Psoas muscle (tissue), 8 donors: ENCODE measurements at regions of chr2 and their contacts with region 1.

Region 1: DNA sequence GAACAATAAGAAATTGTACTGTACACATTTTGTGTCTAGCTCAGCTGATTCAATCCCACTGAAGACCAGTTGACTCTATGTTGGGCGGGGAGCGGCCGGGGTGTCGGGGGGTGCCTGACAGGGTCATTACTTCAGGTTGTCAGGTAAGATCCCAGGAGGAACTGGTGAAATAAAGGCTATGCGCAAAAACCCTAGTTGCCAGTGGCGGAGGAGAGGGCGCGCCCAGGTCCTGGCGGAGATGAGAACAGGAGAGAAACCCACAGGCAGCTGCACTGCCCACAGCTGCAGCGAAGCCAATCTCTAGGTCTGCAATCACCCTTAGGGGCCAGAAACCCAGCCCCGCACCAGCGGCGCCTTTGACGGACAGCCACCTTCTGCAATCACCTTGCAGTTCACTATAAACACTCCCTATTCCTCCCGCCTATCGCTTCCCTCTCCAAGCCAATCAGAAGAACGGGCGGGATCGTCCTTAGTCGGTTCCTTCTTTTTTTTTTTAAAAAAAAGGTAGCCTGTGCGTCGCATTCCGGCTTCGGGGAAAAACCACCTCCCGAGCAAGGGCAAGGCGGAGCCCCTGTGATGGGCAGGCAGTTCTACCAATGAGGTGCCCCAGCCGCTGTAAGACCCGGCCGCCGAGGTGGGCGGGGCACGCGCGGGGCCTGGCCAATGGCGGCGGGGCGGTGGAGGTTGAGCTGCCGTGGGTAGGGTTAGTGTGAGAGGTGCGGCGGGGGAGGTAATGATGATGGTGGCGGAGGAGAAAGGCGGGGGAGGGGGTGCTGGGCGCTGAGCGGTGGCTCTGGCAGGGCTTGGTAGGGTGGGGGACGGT is at the start of gene EHBP1:
- DNase-seq: peak; percentile 99
- ATAC-seq: peak; percentile 97 to 99 (median 98)
- H3K4me3 ChIP-seq: peak within 1 kb of the TSS; percentile 77
- H3K27ac ChIP-seq: peak within 1 kb of the TSS; percentile 82
- H3K4me1 ChIP-seq: peaks cover 25% of the 10 kb centered on the region
- H3K27me3 ChIP-seq: no peaks in the 10 kb centered on the region
- CTCF ChIP-seq: no peak
- total RNA-seq, gene EHBP1: 14.3 to 20.2 (median 16.9) TPM

Region 2: GRCh38 chr2:62456721-62457539 is 248.3 kb before region 1 on chr2:
- intact Hi-C with region 1: loop called in 1 of 2 experiments (anchors 5 kb)
- DNase-seq: peak; percentile 71 to 81
- ATAC-seq: peak; percentile 89 to 96 (median 90)
- H3K4me3 ChIP-seq: peak overlapping the region; percentile 76
- H3K27ac ChIP-seq: peak overlapping the region; percentile 32
- H3K4me1 ChIP-seq: no peaks in the 10 kb centered on the region
- H3K27me3 ChIP-seq: no peaks in the 10 kb centered on the region
- CTCF ChIP-seq: peak; percentile 99

Region 3: GRCh38 chr2:62505750-62506420 is 199.3 kb before region 1 on chr2 and contains the start of gene TMEM17:
- intact Hi-C with region 1: loop called in 1 of 2 experiments (anchors 5 kb)
- DNase-seq: peak; percentile 95 to 96
- ATAC-seq: peak; percentile 95 to 98 (median 97)
- H3K4me3 ChIP-seq: peak within 1 kb of the TSS; percentile 95
- H3K27ac ChIP-seq: peak within 1 kb of the TSS; percentile 88
- H3K4me1 ChIP-seq: peaks cover 7% of the 10 kb centered on the region
- H3K27me3 ChIP-seq: no peaks in the 10 kb centered on the region
- CTCF ChIP-seq: no peak
- total RNA-seq, gene TMEM17: 0.44 to 0.79 (median 0.62) TPM

Region 4: DNA sequence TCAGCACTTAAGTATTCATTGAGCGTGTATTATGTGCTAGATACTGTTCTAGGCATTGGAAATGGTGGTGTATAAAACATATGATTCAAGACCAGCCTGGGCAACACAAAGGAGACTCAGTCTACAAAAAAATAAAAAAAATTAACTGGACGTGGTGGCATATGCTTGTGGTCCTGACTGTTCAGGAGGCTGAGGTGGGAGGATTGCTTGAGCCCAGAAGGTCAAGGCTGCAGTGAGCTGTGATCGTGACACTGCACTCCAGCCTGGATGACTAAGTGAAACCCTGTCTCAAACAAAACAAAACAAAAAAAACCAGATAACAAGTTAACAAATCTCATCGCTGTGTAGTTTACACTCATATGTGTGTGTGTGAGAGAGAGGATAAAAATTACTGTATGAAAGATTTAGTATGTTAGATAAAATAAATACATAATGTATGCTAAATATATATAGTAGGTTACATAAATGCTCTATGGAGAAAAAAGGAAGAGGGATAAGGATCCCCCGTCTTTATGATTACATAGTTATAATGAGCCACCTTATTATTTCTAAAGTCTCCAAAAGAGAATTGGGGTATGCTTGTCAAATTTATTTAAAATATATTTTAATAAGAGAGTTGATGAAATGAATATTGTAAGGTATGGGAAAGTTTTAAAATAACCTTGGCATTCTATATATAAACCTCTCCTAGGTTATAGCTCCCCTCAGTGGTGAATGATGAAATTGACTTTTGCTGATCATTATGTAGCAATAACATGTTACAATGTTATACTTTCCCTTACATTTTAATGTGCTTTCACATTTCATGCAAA is 69.5 kb after region 1 on chr2:
- intact Hi-C with region 1: loop called in 1 of 2 experiments (anchors 5 kb)
- DNase-seq: no peak
- ATAC-seq: peak in 3 of 4 donors; percentile 58 to 88 (median 77)
- H3K4me3 ChIP-seq: no peak overlapping the region
- H3K27ac ChIP-seq: no peak overlapping the region
- H3K4me1 ChIP-seq: no peaks in the 10 kb centered on the region
- H3K27me3 ChIP-seq: no peaks in the 10 kb centered on the region
- CTCF ChIP-seq: peak; percentile 82

Region 5: DNA sequence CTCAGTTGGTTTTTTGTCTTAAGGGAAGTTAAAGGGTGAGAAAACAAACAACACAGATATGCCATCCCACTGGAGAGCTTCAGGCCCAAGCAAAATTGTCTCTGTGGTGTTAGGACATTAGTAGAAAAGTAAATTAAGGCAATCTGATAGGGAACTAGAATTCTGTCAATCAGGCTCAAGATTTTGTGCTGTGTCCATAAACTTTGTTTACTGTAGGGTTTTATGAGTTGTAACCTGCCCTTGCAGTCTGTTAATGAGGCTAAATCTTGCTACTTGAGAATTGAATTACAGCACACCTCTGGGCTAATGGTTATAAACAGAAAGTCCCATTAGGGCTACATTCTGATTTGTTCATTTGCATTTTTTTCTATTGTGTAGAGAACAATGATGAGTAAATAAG is 267.4 kb after region 1 on chr2:
- intact Hi-C with region 1: no loop called
- DNase-seq: no peak
- ATAC-seq: no peak
- H3K4me3 ChIP-seq: no peak overlapping the region
- H3K27ac ChIP-seq: no peak overlapping the region
- H3K4me1 ChIP-seq: no peaks in the 10 kb centered on the region
- H3K27me3 ChIP-seq: no peaks in the 10 kb centered on the region
- CTCF ChIP-seq: no peak